HepG2 (cell line): ENCODE measurements at regions of chr15 and their contacts with region 1.

Region 1: DNA sequence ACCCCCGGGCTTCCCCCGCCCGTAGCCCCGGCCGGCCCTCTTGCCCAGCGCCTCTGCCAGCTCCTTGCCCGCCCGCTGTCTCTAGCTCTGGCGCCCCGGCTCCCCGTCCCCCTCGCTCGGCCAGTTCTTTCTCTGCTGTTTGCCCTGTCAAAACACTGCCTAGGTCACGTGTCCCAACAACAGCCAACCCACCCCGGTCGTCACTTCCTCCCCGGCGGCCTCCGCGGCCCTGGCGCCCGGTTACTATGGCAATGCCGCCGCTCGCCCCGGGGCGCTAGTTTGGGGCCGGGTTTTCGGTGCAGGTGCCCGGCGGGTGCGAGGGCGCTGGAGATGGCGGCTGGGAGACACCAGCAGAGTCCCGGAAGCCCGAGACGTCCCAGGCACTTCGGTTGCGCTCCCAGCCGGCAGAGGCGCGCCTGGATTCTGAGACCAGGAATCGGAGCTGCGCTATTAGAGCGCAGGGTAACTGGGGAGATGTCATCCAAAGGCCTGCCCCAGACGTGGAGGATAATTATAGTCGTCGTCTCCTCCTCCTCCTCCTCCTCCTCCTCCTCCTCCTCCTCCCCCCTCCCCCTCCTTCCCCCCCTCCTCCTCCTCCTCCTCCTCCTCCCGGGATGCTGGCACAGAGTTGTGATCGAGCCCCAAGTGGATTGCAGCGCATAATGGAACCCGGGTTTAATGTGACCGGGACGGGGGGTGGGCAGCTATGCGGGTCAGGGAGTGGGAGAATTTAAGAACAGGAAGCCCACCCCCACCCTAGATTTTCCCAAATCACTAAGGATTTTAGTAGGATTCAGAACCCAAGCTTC is at the start of gene ATOSA:
- DNase-seq: peak; percentile 82
- ATAC-seq: peak; percentile 91
- H3K4me3 ChIP-seq: peak within 1 kb of the TSS; percentile 84 to 98 (median 94)
- H3K27ac ChIP-seq: peak within 1 kb of the TSS; percentile 96
- H3K4me1 ChIP-seq: peaks cover 14% of the 10 kb centered on the region
- H3K27me3 ChIP-seq: no peaks in the 10 kb centered on the region; a peak in 1 of 5 replicates
- CTCF ChIP-seq: 0 out of 2 replicates have a peak, but pooled peaks have one; percentile 10
- EP300 ChIP-seq: 0 out of 4 replicates have a peak, but pooled peaks of 1 of the 2 experiments have one; percentile 10
- POLR2A ChIP-seq: peak in 1 of 2 experiments; percentile 64; a peak in 2 of 4 replicates
- RAD21 ChIP-seq: no peak
- total RNA-seq, gene ATOSA: 5.5 and 6.6 TPM in 2 replicates

Region 2: GRCh38 chr15:52528991-52529926 is 150.2 kb before region 1 on chr15:
- CTCF ChIA-PET with region 1: no interaction called
- POLR2A ChIA-PET with region 1: no interaction called
- in situ Hi-C with region 1: no loop called
- intact Hi-C with region 1: loop called (anchors 10 kb)
- DNase-seq: no peak
- ATAC-seq: peak; percentile 77
- H3K4me3 ChIP-seq: peak overlapping the region; percentile 41 to 78 (median 56); a peak in 5 of 6 replicates
- H3K27ac ChIP-seq: no peak overlapping the region
- H3K4me1 ChIP-seq: peaks cover 23% of the 10 kb centered on the region
- H3K27me3 ChIP-seq: peaks cover 3 to 42% of the 10 kb centered on the region in 2 experiments; a peak in 4 of 5 replicates
- CTCF ChIP-seq: 0 out of 2 replicates have a peak, but pooled peaks have one; percentile 23
- EP300 ChIP-seq: no peak
- POLR2A ChIP-seq: no peak
- RAD21 ChIP-seq: 0 out of 2 replicates have a peak, but pooled peaks have one; percentile 23

Region 3: GRCh38 chr15:52568601-52569256 is 110.7 kb before region 1 on chr15 and contains the start of gene ARPP19:
- CTCF ChIA-PET with region 1: no interaction called
- POLR2A ChIA-PET with region 1: interaction called, 4 read pairs
- in situ Hi-C with region 1: no loop called
- intact Hi-C with region 1: loop called (anchors 2 kb)
- DNase-seq: peak; percentile 94
- ATAC-seq: peak; percentile 93
- H3K4me3 ChIP-seq: peak within 1 kb of the TSS; percentile 64 to 83 (median 80)
- H3K27ac ChIP-seq: peak within 1 kb of the TSS; percentile 87
- H3K4me1 ChIP-seq: peaks cover 48% of the 10 kb centered on the region
- H3K27me3 ChIP-seq: no peaks in the 10 kb centered on the region; a peak in 1 of 5 replicates
- CTCF ChIP-seq: no peak
- EP300 ChIP-seq: peak in 1 of 2 experiments; percentile 60; a peak in 1 of 4 replicates
- POLR2A ChIP-seq: peak; percentile 68 to 69
- RAD21 ChIP-seq: no peak
- total RNA-seq, gene ARPP19: 123 and 213 TPM in 2 replicates

Region 4: GRCh38 chr15:52651868-52652267 is 27.6 kb before region 1 on chr15:
- CTCF ChIA-PET with region 1: no interaction called
- POLR2A ChIA-PET with region 1: no interaction called
- in situ Hi-C with region 1: no loop called
- intact Hi-C with region 1: loop called (anchors 1 kb)
- DNase-seq: peak; percentile 80
- ATAC-seq: peak; percentile 100
- H3K4me3 ChIP-seq: peak overlapping the region in 2 of 3 experiments; percentile 51 to 56; a peak in 3 of 6 replicates
- H3K27ac ChIP-seq: peak overlapping the region; percentile 56
- H3K4me1 ChIP-seq: peaks cover 17% of the 10 kb centered on the region
- H3K27me3 ChIP-seq: no peaks in the 10 kb centered on the region
- CTCF ChIP-seq: no peak
- EP300 ChIP-seq: peak in 1 of 2 experiments; percentile 61; a peak in 2 of 4 replicates
- POLR2A ChIP-seq: no peak
- RAD21 ChIP-seq: no peak

Region 5: GRCh38 chr15:52695183-52695582 is 15.7 kb after region 1 on chr15:
- CTCF ChIA-PET with region 1: no interaction called
- POLR2A ChIA-PET with region 1: no interaction called
- in situ Hi-C with region 1: no loop called
- intact Hi-C with region 1: no loop called
- DNase-seq: no peak
- ATAC-seq: no peak
- H3K4me3 ChIP-seq: no peak overlapping the region
- H3K27ac ChIP-seq: no peak overlapping the region
- H3K4me1 ChIP-seq: no peaks in the 10 kb centered on the region
- H3K27me3 ChIP-seq: no peaks in the 10 kb centered on the region
- CTCF ChIP-seq: no peak
- EP300 ChIP-seq: no peak
- POLR2A ChIP-seq: no peak
- RAD21 ChIP-seq: no peak

Region 6: DNA sequence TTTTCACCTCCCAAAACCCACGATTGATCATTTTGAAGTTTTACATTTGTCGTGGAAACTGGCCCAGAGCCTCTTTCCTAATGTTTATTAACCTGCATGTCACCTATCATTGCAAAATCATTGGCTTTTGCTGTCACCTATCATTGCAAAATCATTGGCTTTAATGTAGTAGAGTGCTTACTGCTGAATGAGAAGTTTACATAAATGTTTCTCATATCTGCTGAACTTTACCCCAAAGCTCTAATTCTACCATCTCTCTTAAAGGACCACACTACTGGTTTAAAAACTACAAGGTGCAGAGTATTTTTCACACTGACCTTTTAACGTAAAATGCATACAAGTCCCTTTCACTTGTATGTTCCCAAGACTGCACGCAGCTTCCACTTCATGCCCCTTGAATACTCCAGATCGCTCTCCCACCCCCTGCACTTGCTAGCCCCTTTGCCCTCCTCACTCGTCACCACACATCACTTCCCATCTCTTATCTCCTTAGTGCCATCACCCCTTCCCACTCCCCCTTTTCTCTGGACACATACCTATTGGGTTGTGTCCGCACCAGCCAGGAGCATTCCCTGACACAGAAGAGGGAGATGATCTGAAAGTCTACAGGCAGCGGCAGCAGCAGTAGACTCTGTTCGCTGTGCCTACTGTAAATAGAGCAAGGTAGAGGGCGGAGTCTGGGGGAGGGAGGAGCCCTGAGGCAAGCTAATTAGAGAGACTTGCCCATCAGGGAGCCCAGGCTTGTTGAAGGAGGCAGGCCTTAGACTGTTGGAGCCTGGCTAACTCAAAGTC is 29.9 kb after region 1 on chr15:
- CTCF ChIA-PET with region 1: no interaction called
- POLR2A ChIA-PET with region 1: no interaction called
- in situ Hi-C with region 1: no loop called
- intact Hi-C with region 1: loop called (anchors 2 kb)
- DNase-seq: peak; percentile 51
- ATAC-seq: peak; percentile 99
- H3K4me3 ChIP-seq: peak overlapping the region; percentile 54 to 69 (median 65)
- H3K27ac ChIP-seq: peak overlapping the region; percentile 48
- H3K4me1 ChIP-seq: peaks cover 27% of the 10 kb centered on the region
- H3K27me3 ChIP-seq: no peaks in the 10 kb centered on the region
- CTCF ChIP-seq: no peak
- EP300 ChIP-seq: peak in 1 of 2 experiments; percentile 36; a peak in 1 of 4 replicates
- POLR2A ChIP-seq: 0 out of 4 replicates have a peak, but pooled peaks of 1 of the 2 experiments have one; percentile 40
- RAD21 ChIP-seq: no peak